Sciatic nerve (tissue), 2 donors: ENCODE measurements at regions of chr3 and their contacts with region 1.

Region 1: DNA sequence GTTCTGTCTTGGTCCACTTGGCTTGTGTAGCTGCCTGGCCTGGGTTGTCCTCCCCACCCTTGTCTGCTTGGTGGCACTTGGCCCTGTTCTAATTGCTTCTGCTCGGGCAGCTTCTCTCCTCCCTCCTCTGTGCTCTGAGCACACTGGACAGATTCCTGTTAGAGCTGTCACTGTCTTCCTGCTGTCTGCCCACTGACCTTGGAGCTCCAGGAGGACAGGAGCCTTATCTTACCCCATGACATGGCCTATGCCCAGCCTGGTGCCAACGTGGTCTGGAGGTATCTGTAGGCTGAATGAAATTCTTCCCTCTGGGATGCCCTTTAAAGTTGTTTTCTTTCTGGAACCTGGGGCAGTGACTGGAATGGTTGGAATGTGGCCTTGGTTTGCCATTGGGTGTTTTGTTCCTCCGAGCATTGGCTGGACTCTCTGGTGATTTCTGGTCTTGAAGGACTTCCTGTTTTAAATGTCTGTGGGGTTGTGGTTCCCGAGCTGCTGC is 94.1 kb downstream of the FAM43A start:
- DNase-seq: no peak
- ATAC-seq: no peak

Region 2: DNA sequence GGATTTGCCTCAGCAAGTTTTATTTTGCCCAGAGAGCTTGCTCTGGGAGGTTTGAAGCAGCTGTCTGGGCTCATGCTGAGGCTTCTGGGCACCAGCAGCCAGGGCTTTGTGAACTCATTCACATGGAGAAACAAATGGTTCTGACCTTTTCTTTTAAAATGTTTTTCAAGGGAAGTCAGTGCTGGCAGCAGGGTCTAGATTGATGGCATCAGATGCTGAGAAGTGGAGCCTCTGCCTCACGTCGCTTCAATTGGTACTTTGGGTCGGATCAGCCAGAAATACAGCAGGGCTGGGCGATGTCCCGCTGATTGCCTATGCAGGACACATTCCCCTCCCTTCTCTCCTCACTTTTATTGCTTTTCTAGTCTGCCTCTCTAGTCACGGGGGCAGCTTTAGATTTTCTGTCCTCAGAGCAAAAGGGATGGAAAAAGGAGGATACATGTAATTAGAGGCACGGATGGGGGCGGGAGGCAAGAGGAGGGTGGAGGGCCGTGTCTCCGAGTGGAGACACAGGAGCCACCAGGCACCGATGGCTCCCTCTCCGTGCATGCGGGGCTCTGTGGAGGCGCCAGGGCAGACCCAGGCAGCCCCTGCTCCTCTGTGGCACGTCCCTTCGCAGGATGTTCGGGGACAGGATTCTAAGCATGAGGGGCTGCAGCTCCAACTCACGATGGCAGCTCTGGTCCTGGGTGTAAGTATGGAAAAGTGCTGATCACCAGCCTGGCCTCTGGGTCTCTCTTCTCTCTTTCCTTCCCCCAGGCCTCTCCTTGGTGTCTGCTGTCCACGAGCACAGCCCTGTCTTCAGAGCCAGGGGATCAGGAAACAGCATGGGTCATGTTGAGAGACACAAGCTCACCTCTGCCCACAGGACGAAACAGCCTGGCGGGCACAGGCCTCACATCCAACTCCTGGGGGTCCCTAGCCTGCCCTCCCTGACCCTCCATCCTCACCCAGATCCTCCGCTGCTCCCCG is 22.0 kb after region 1 on chr3:
- intact Hi-C with region 1: loop called (anchors 2 kb)
- DNase-seq: no peak
- ATAC-seq: no peak